ENCODE measurements at regions of chr12 and their contacts with region 1.

Region 1: GRCh38 chr12:69490920-69491643 is 20.9 kb downstream of the FRS2 start:
- DNase-seq: no peak
- ATAC-seq: no peak
- H3K4me3 ChIP-seq: no peak overlapping the region
- H3K27ac ChIP-seq: no peak overlapping the region
- H3K4me1 ChIP-seq: no peaks in the 10 kb centered on the region
- H3K27me3 ChIP-seq: no peaks in the 10 kb centered on the region
- CTCF ChIP-seq: no peak

Region 2: GRCh38 chr12:69095765-69096477 is 395.2 kb before region 1 on chr12:
- CTCF ChIA-PET with region 1: no interaction called
- POLR2A ChIA-PET with region 1: no interaction called
- intact Hi-C with region 1: no loop called
- DNase-seq: no peak
- ATAC-seq: no peak
- H3K4me3 ChIP-seq: no peak overlapping the region
- H3K27ac ChIP-seq: no peak overlapping the region
- H3K4me1 ChIP-seq: peaks cover 4% of the 10 kb centered on the region; the same call in 1 of the 2 replicates
- H3K27me3 ChIP-seq: peaks cover 21% of the 10 kb centered on the region; the same call in 1 of the 2 replicates
- CTCF ChIP-seq: no peak

Region 3: DNA sequence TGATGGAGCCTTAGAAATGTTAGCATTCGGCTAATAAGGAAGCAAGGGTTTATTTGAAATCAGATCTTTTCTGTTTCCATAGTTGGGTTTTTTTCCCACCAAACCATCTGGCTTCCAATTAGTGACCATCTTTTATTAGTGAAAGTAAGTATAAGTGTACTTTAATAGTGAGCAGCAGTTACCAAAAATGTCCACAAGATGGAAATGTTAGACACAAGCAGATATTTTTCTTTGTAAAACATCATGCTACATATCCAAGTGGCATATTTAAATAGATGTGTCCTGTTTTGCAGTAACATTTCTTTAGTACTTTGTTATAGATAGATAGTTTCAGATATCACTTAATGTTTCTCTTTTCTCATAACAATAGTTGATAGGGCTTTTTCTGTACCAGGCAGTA is 102.7 kb before region 1 on chr12:
- CTCF ChIA-PET with region 1: no interaction called
- POLR2A ChIA-PET with region 1: no interaction called
- intact Hi-C with region 1: no loop called
- DNase-seq: peak; percentile 71
- ATAC-seq: peak; percentile 48; the same call in 1 of the 2 replicates
- H3K4me3 ChIP-seq: no peak overlapping the region
- H3K27ac ChIP-seq: no peak overlapping the region
- H3K4me1 ChIP-seq: 0 out of 2 replicates have a peak, but pooled peaks cover 7% of the 10 kb centered on the region
- H3K27me3 ChIP-seq: no peaks in the 10 kb centered on the region
- CTCF ChIP-seq: peak; percentile 76

Region 4: DNA sequence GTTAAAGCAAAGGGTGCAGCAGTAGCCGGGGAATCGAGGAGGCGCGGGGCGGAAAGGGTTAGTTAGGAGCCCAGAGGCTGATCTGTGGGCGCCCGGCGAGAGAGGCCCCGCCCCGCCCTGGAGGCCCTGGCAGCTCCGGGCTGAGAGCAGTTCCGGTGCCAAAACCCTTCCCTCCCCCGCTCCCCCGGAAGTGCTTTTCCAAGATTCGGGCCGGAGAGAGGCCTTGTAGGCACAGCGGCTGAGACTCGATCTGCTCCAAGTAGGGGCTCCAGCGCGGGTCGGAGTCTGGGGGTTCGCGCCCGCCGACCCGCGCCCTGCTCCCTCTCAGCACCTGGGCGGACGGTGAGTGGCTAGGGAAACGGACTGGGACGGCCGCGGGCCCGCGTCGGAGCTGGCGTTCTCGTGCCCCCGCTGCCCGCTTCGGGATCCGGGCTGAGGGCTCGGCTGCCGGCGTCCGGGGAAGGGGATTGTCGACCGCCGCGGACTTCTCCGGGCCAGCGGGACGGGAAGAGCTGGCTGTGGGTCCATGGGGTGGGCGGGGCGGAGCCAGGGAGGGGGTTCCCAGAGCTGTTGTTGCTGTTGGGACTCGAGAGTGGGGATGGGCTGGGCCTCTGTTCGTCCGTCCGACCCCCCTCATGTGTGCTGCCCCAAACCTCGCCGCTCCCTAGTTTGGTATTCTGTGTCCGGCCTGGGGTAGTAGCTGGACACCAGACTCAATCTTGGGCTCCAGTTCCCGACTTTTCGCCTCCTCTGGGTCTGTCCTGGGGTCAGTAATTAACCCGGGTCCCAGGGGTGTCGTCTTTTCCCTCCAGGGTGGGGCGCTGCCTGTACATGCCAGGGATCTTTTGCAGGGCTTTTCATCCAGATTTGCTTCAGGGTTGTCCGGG is 20.6 kb before region 1 on chr12 and contains the start of gene FRS2:
- CTCF ChIA-PET with region 1: no interaction called
- POLR2A ChIA-PET with region 1: no interaction called
- intact Hi-C with region 1: no loop called
- DNase-seq: peak; percentile 88
- ATAC-seq: peak; percentile 95
- H3K4me3 ChIP-seq: peak within 1 kb of the TSS; percentile 90
- H3K27ac ChIP-seq: peak within 1 kb of the TSS; percentile 43
- H3K4me1 ChIP-seq: peaks cover 11% of the 10 kb centered on the region; the same call in 1 of the 2 replicates
- H3K27me3 ChIP-seq: no peaks in the 10 kb centered on the region
- CTCF ChIP-seq: peak; percentile 61
- total RNA-seq, gene FRS2: 17.6 and 35.0 TPM in 2 replicates

Region 5: GRCh38 chr12:69595689-69596088 is 104.6 kb after region 1 on chr12:
- CTCF ChIA-PET with region 1: no interaction called
- POLR2A ChIA-PET with region 1: interaction called, 11 read pairs
- intact Hi-C with region 1: no loop called
- DNase-seq: no peak
- ATAC-seq: peak; percentile 27; the same call in 1 of the 2 replicates
- H3K4me3 ChIP-seq: no peak overlapping the region
- H3K27ac ChIP-seq: no peak overlapping the region
- H3K4me1 ChIP-seq: no peaks in the 10 kb centered on the region
- H3K27me3 ChIP-seq: no peaks in the 10 kb centered on the region
- CTCF ChIP-seq: 0 out of 2 replicates have a peak, but pooled peaks have one; percentile 17

Measured in PC-3 (cell line).